Posterior vena cava (tissue), 2 donors: ENCODE measurements at regions of chr3 and their contacts with region 1.

Region 1: GRCh38 chr3:186170516-186170915 is 61.6 kb upstream of the ETV5 start:
- DNase-seq: no peak

Region 2: DNA sequence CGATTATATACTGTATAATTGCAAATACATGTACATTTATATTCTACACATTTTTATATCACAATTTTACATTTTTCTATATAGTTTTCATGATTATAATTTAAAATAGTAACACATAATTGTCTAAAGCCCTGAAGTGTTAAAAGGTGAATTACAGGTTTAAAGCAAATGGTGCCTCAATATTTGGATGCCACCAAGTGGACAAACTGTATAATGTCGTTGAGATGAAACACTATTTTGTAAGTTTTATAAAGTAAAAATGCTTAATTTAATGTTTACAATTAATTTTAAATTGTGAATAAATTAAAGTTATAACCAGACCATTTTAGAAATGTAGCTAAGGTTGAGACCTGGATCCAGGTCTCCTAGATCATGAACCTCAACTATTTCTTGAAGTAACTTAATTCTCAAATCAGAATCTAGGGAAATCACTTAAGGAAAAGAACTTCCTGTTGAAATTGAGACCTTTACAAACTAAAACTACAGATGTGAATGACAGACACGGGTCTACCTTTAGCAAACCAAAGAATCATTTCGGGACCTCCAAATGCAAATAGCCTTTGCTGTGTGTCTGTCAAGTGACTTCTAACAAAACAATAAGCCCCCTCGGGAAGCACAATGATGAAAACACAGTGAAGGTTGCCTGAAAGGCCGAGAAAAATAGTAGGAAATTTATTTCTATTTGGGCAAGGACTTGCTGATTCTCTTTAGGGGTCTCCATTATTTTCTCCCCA is 954.5 kb before region 1 on chr3:
- intact Hi-C with region 1: no loop called
- DNase-seq: no peak

Region 3: DNA sequence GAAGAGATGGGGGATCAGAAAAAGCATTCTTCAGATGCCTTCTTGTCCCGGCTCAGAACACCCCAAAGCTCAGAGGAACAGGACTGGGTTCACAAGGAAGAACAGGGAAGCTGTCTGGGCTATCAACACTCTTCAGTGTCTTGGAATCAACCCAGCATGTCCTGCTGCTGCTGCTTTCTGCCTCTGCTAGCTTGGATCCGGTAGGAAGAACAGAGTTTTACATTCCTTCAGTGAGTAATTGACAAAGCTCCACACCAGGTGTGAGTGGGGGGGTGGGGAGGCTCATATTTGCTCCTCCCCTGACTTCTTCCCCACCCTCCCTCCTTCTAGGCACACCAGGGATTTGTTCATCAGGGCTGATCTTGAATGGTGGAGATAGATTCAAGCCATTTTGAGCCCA is 48.5 kb before region 1 on chr3:
- intact Hi-C with region 1: no loop called
- DNase-seq: no peak

Region 4: GRCh38 chr3:186217820-186218164 is 47.3 kb after region 1 on chr3:
- intact Hi-C with region 1: loop called in 1 of 2 experiments (anchors 1 kb)
- DNase-seq: no peak

Region 5: GRCh38 chr3:186653080-186653707 is 482.7 kb after region 1 on chr3:
- intact Hi-C with region 1: no loop called
- DNase-seq: no peak